ENCODE measurements at regions of chr6 and their contacts with region 1.

Region 1: GRCh38 chr6:3251462-3252314 is 7.1 kb upstream of the PSMG4 start:
- DNase-seq: peak; percentile 71 to 89
- H3K4me3 ChIP-seq: peak overlapping the region; percentile 5; the same call in 1 of the 2 replicates
- H3K27ac ChIP-seq: 0 out of 2 replicates have a peak overlapping the region, but pooled peaks have one; percentile 40
- H3K4me1 ChIP-seq: peaks cover 15% of the 10 kb centered on the region
- H3K27me3 ChIP-seq: no peaks in the 10 kb centered on the region
- CTCF ChIP-seq: peak; percentile 93

Region 2: DNA sequence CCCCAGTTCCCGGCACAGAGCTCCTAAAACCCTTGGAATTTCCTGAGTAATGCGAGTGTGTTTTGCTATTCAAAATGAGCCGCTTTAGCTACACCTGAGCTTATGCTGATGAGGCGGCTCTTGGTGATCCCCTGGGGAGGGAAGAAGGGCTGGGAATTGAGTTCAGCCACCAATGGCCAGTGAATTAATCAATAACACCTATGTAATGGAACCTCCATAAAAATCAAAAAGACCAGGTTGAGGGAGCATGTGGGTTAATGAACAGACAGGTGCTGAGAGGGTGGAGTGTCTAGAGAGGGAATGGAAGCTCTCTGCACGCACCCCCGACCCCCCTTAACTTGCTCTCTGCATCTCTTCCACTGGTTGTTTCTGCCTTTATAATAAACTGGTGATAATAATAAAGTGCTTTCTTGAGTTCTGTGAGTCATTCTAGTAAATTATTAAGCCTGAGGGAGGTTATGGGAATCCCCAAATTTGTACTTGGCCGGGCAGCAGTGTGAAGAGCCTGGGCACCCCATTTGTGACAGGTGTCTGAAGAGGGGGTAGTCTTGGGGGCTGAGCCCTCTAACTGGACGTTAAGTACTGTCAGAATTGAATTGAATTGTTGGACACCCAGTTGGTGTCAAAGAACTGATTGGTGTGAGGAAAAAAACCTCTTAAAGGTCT is 385.4 kb before region 1 on chr6:
- CTCF ChIA-PET with region 1: no interaction called
- POLR2A ChIA-PET with region 1: no interaction called
- intact Hi-C with region 1: no loop called
- DNase-seq: no peak
- H3K4me3 ChIP-seq: no peak overlapping the region
- H3K27ac ChIP-seq: no peak overlapping the region
- H3K4me1 ChIP-seq: no peaks in the 10 kb centered on the region
- H3K27me3 ChIP-seq: no peaks in the 10 kb centered on the region
- CTCF ChIP-seq: no peak

Region 3: DNA sequence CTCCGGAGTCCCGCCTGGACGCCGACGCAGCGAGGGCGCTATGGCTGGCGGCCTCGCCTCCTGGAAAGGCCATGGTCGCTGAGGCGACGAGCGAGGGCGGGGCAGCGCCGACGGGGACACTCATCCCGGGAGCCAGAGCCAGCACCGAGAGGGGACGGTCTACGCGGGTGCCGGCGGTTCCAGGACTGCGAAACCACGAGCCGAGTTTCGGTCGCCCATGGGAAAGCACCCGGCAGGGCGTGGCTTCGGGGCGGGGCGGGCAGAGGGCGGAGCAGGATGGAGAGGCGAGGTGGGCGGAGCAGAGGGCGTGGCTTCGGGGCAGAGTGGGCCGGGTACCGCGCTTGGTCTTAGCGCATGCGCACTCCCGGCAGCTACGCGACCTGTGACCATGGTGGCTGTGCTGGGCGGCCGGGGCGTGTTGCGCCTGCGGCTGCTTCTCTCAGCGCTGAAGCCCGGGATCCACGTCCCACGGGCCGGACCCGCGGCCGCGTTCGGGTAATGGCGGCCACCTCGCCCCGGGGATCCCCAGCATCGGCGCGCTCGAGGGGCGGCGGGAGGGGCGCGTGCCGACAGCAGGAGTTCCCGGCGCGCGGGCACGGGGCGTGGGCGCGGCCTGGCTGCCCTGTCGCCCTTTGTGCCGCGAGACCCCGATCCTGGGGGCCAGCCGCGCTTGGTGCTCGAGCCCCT is 133.2 kb before region 1 on chr6 and contains the start of gene BPHL:
- CTCF ChIA-PET with region 1: no interaction called
- POLR2A ChIA-PET with region 1: no interaction called
- intact Hi-C with region 1: loop called (anchors 2 kb)
- DNase-seq: peak; percentile 71 to 98
- H3K4me3 ChIP-seq: peak within 1 kb of the TSS; percentile 84
- H3K27ac ChIP-seq: peak within 1 kb of the TSS; percentile 97
- H3K4me1 ChIP-seq: peaks cover 22% of the 10 kb centered on the region
- H3K27me3 ChIP-seq: no peaks in the 10 kb centered on the region
- CTCF ChIP-seq: no peak
- total RNA-seq, gene BPHL: 23.7 and 24.5 TPM in 2 replicates

Region 4: DNA sequence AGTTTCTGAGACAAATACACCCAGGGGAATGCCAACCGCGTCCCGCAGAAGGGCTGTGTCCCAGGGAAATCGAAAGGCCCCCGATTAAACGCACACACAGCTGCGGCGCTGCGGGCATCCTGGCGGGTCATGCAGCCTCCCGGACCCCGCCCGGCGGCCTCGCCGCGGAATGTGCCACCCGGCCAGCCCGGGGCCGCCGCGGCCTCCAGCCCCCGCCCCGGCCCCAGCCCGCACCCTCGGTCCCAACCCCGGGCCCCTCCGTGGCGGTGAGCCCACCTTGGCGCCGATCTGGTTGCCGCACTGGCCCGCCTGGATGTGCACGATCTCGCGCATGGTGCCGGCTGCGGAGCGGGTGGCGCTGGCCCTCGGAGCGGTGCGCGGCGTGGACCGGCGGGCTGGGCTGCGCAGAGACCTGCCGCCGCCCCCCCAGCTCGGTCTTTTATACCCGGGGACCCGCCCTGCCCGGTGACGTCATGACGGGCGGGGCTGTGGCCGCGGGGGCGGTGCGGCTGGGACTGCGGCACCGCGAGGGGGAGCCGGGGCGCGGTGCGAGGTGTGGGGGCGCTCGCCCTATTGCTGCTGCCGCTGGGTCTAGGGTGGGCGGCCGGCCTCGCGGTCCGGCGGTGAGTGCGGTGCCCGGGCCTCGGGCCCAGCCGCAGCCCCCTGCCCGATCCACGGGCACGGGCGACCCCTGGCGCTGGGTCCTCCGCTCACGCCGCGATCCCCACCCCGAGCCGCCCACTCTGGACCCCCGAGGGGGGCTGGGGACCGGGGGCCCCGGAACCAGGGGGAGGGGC is 94.4 kb before region 1 on chr6 and contains the start of gene TUBB2A:
- CTCF ChIA-PET with region 1: interaction called, 4 read pairs
- POLR2A ChIA-PET with region 1: interaction called, 8 read pairs
- intact Hi-C with region 1: loop called (anchors 1 kb)
- DNase-seq: peak; percentile 44 to 86
- H3K4me3 ChIP-seq: peak within 1 kb of the TSS; percentile 69
- H3K27ac ChIP-seq: no peak within 1 kb of the TSS
- H3K4me1 ChIP-seq: peaks cover 10% of the 10 kb centered on the region
- H3K27me3 ChIP-seq: no peaks in the 10 kb centered on the region
- CTCF ChIP-seq: peak; percentile 40; the same call in 1 of the 2 replicates
- total RNA-seq, gene TUBB2A: 17.0 and 19.0 TPM in 2 replicates

Measured in PC-9 (cell line).